Ovary (tissue), 10 donors: ENCODE measurements at regions of chr11 and their contacts with region 1.

Region 1: DNA sequence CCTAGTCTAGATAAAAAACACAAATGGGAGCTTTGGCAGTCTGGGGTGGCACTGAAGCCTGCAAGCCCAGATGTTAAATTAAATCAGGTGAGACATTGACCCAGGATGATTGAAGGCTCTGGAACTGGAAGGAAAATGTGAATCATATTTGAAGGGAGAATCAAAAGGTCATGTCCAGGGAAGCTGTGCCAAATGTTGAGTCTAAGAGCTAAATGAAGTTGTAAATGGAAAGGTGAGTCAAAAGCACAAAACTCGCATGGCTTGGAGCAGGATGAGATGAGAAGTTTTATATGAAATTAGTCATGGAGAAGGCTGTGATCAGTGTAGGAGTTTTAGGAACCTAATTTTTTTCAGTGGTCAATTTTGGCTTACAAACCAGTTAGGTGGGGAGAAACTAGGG is 301.1 kb downstream of the BLID start:
- DNase-seq: no peak
- H3K4me3 ChIP-seq: no peak overlapping the region
- H3K27ac ChIP-seq: no peak overlapping the region
- H3K4me1 ChIP-seq: no peaks in the 10 kb centered on the region
- H3K27me3 ChIP-seq: no peaks in the 10 kb centered on the region
- CTCF ChIP-seq: no peak
- EP300 ChIP-seq: no peak
- POLR2A ChIP-seq: no peak

Region 2: DNA sequence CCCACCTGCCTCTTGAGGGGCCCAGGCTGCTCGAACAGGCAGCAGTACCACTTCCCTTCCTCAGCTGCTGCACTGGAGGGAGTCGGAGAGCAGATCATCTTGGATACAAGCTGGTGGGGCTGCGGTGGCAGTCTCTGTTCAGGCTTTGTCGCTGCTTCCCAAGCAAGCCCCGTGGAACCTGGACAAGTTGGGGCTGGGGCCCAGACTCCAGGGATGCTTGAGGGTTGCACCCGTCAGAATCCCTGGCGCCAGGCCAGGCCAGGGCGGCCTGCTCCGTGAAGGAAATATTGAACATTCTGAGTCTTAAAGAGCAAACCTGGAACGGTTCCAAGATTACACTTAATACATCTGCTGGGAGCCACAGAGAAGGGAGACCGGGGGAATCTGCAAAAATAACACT is 52.1 kb before region 1 on chr11:
- intact Hi-C with region 1: loop called in 1 of 4 experiments (anchors 2 kb)
- DNase-seq: peak; percentile 39 to 70 (median 53)
- H3K4me3 ChIP-seq: no peak overlapping the region
- H3K27ac ChIP-seq: no peak overlapping the region
- H3K4me1 ChIP-seq: peaks cover 5% of the 10 kb centered on the region
- H3K27me3 ChIP-seq: no peaks in the 10 kb centered on the region
- CTCF ChIP-seq: no peak
- EP300 ChIP-seq: no peak
- POLR2A ChIP-seq: no peak

Region 3: GRCh38 chr11:121795174-121795573 is 19.8 kb before region 1 on chr11:
- intact Hi-C with region 1: no loop called
- DNase-seq: no peak
- H3K4me3 ChIP-seq: no peak overlapping the region
- H3K27ac ChIP-seq: no peak overlapping the region
- H3K4me1 ChIP-seq: peaks cover 10% of the 10 kb centered on the region
- H3K27me3 ChIP-seq: no peaks in the 10 kb centered on the region
- CTCF ChIP-seq: no peak
- EP300 ChIP-seq: no peak
- POLR2A ChIP-seq: no peak